ENCODE measurements at regions of chr11 and their contacts with region 1.

Region 1: DNA sequence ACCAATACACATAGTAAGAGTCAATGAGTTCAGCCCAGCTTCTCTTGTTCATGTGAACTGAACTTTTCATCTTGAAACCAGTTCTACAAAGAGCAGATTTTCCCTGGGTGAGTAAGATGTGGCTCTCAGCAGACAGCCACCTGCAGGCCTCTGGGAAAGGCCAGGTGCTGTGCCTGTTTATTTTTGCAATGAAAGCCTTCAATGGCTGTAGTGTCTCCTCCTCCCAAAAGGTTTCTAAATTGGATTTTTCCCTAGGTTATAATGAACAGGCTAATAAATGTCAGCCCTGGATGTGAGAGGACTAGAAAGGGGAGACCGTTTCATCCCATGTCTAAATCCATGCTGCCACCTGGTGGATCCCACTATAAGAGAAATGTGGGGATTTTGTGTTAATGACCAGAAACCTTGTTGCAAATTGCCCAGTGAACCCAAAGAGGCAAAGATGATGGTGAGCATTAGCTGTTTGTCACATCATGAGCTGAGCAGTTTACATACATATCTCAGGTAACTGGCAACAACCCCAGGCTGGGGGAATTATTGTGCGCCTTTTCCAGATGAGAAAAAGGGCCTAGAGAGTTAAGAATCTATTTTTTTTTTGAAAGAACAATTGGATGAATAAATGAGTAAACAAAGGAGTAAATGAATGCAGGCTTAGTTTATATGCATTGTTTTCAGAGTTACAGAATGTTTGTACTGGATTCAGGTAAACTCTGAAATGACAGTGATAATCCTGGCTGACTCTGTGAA is 12.7 kb downstream of the C11orf91 start:
- DNase-seq: no peak
- ATAC-seq: no peak

Region 2: DNA sequence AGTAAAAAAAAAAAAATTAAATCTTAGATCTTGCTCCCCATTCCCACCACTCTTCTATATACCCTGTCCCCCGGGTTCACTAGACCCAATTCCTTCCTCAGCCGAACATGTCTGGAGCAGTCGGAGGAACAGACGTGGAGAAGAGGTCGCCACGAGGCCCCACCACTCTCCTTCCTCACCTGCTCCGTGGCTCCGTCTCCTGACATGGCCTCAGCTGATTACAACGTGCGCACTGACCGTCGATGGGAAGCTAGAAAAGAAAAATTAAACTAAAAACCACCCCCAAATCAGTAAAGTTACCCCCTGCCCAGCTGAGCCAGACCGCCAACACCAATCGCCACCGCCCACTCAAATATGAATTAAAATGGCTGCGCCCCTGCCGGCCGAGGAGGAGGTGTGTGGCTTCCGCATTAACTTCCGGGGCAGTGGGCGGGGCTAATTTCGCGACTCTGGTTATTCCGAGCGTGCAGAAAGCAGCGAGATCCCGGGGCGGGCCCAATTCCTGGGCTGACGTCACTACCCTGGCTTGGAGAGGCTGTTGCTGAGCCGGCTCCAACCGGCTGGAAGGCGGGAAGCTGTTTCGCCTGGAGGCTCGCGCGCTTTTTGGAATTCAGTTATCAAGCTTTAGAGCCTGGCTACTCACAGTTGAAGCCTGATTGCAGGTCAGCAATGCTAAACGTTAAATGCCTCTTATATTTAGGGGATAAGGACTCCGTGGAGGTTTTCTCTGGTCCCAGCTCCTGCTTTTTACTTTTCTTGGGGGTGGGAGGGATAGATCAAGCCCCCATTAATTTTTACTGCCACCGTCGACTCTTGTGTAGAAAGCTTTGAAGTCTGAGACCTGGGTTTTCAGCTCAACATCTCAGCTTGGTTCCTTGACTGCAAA is 526.5 kb before region 1 on chr11 and contains the start of gene CSTF3:
- intact Hi-C with region 1: loop called (anchors 10 kb)
- DNase-seq: peak; percentile 100
- ATAC-seq: peak; percentile 99
- total RNA-seq, gene CSTF3: 9.6 TPM

Region 3: DNA sequence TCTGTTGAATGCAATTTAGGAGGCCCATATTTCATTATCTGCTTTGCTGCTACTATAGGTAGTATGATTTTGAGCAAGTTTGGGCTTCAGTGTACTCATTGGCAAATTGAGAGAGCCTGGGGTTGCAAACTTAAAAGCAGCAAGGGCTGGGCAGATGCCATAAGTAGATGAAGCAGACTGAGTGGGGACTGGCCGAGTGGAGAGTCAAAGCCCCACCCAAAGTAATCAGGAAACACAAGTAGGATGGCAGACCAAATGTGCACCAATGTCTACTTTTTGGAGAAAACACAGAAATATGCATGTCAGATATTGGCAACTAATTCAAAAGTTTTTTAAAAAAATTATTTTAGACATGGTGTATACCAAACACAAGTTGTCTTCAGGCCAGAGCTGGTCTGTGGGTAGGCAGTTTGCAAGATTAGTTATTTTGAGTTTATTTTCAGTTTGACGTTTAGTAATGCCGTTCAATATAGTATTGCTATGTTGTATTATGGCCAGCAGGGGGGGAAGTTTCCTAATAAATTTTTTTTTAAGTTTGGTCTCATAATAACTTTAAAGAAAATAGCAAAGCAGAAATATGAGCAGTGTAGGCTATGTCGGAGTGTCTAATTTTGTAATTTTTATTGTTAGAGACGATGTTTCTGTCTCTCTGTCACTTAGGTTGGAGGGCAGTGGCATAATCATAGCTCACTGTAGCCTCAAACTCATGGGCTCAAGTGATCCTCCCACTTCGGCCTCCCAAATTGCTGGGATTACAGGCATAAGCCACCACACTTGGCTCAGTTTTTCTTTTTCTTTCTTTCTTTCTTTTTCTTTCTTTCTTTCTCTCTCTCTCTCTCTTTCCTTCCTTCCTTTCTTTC is 325.6 kb before region 1 on chr11:
- intact Hi-C with region 1: loop called (anchors 2 kb)
- DNase-seq: no peak
- ATAC-seq: peak; percentile 60

Region 4: GRCh38 chr11:33542921-33543320 is 145.0 kb before region 1 on chr11:
- intact Hi-C with region 1: loop called (anchors 5 kb)
- DNase-seq: peak; percentile 57
- ATAC-seq: peak; percentile 71

Region 5: GRCh38 chr11:33736148-33736809 is 48.4 kb after region 1 on chr11 and contains the start of gene CD59:
- intact Hi-C with region 1: loop called (anchors 5 kb)
- DNase-seq: peak; percentile 98
- ATAC-seq: peak; percentile 96
- total RNA-seq, gene CD59: 713 TPM

Measured in Right ventricle myocardium superior (tissue), 1 donor.